Endothelial cell of umbilical vein (primary cell): ENCODE measurements at regions of chr1 and their contacts with region 1.

Region 1: GRCh38 chr1:156860113-156860627 is 495 bp upstream of the NTRK1 start:
- DNase-seq: peak; percentile 40
- H3K4me3 ChIP-seq: peak overlapping the region in 2 of 3 experiments; percentile 1 to 30
- H3K27ac ChIP-seq: no peak overlapping the region
- H3K4me1 ChIP-seq: peaks cover 17% of the 10 kb centered on the region
- H3K27me3 ChIP-seq: peaks cover 39 to 40% of the 10 kb centered on the region in 2 experiments
- CTCF ChIP-seq: peak; percentile 79 to 90
- POLR2A ChIP-seq: no peak

Region 2: DNA sequence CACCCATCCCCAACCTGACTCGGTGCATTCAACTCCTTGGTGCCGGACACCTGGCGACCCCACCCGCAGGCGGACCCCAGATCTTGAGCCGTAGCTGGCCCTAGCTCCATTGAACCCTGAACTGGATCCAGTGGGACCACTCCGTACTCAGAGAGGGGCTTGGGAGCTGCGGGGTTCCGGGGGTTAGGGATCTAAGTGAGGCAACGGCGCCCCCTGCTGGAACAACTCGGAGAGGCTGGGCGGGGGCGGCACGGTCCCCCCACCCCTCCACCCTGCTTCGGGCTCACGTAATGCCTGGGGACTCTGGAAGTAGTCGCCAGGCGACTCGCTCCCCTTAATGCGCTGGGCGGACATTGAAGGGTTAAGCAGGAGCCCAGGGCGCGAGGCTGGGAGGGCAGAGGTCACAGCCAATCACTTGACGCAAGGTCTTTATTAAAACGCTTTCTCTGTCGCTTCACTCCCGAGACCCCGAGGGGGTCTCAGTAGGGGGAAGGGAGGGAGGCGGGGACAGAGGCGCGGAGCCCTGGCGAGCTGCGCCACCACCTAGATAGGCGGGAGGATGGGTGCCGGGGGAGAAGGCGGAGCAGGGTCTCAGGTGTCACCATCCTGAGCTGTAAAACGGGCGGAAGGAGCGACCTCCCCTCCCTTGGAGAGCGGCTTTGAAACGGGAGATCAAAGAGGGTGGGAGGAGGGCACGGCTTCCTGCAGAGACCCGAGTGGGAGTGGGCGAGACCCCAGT is 154.1 kb before region 1 on chr1:
- CTCF ChIA-PET with region 1: interaction called, 10 read pairs
- POLR2A ChIA-PET with region 1: interaction called, 3 read pairs
- dilution Hi-C with region 1: no loop called
- intact Hi-C with region 1: no loop called
- DNase-seq: peak; percentile 57
- H3K4me3 ChIP-seq: peak overlapping the region in 1 of 3 experiments; percentile 4
- H3K27ac ChIP-seq: no peak overlapping the region
- H3K4me1 ChIP-seq: peaks cover 19% of the 10 kb centered on the region
- H3K27me3 ChIP-seq: peaks cover 0 to 3% of the 10 kb centered on the region in 2 experiments
- CTCF ChIP-seq: peak; percentile 76 to 87
- POLR2A ChIP-seq: no peak

Region 3: GRCh38 chr1:156773607-156774006 is 86.6 kb before region 1 on chr1:
- CTCF ChIA-PET with region 1: interaction called, 14 read pairs
- POLR2A ChIA-PET with region 1: no interaction called
- dilution Hi-C with region 1: no loop called
- intact Hi-C with region 1: no loop called
- DNase-seq: no peak
- H3K4me3 ChIP-seq: no peak overlapping the region
- H3K27ac ChIP-seq: no peak overlapping the region
- H3K4me1 ChIP-seq: peaks cover 10% of the 10 kb centered on the region
- H3K27me3 ChIP-seq: no peaks in the 10 kb centered on the region
- CTCF ChIP-seq: peak in 1 of 2 donors; percentile 6
- POLR2A ChIP-seq: no peak

Region 4: DNA sequence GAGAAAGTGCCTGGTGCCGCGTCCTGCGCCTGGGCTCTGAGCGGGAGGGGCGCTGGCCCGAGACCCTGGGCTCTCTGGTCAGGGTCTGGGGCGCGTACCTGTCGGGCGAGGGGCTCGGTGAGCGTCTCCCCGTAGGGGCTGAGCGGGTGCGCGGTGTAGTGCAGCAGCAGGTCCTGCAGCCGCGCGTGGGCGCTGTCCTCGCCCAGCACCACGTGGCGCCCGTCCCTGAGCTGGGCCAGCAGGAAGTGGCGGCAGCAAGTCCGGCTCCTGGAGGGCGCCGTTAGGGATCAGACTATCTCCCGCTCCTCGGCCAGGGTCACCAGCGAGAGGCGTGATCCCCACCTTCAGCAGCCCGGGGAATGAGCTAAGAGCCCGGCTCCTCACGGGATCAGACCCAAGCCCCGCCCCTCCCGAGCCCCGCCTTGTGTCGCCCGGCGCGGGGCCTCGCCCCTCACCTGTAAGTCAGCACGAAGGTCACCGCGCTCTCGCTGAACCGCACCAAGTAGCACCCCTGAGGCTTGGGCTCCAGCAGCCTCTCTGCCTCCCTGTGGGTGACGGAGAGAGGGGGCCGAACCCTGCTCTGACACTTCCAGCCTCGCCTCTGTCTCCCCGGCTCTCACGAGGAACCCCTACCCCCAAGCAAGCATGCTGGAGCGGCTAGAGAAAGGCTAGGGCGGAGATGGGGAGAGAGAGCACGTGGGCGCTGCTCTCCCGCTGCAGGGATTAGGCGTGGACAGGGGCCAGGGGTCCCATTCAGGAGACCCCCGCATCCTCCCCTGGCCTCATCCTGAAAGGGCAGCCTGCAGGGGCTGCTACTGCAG is 46.2 kb before region 1 on chr1:
- CTCF ChIA-PET with region 1: interaction called, 67 read pairs
- POLR2A ChIA-PET with region 1: no interaction called
- dilution Hi-C with region 1: no loop called
- intact Hi-C with region 1: loop called (anchors 1 kb)
- DNase-seq: peak; percentile 51
- H3K4me3 ChIP-seq: peak overlapping the region in 1 of 3 experiments; percentile 24
- H3K27ac ChIP-seq: peak overlapping the region; percentile 44
- H3K4me1 ChIP-seq: peaks cover 33% of the 10 kb centered on the region
- H3K27me3 ChIP-seq: no peaks in the 10 kb centered on the region
- CTCF ChIP-seq: peak; percentile 64 to 85
- POLR2A ChIP-seq: no peak

Region 5: DNA sequence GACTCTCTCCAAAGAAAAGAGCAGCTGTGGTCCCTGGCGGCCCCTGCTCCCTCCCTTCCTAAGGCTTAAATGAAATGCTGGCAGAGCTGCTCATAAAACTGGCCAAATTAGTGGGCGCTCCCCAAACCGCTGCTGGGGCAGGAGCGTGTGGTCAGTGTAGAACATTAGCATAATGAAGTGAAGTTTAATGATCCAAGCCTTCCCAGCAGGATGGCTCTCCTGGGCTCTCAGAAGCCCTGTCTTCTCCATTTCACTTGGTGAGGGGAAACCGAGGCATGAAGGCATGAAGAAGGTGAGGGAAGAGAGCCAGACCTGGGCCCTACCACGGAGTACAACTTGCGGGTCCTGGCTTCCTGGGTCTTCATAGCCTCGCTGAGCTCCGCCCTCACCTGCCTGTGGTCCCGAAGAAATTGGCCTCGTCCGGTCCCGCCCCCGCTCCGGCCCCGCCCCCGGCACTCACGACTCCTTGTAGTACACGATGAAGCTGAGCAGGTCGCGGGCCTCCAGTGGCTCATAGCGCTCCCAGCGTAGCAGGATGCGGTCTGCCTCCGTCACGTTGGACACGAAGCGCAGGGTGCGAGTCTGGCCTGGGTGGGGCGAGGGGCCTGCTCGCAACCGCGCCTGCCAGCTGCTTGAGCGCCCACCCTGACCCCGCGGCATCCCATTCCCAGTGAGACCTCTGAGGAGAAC is 11.6 kb before region 1 on chr1:
- CTCF ChIA-PET with region 1: interaction called, 42 read pairs
- POLR2A ChIA-PET with region 1: no interaction called
- dilution Hi-C with region 1: no loop called
- intact Hi-C with region 1: no loop called
- DNase-seq: no peak
- H3K4me3 ChIP-seq: no peak overlapping the region
- H3K27ac ChIP-seq: no peak overlapping the region
- H3K4me1 ChIP-seq: peaks cover 39% of the 10 kb centered on the region
- H3K27me3 ChIP-seq: peaks cover 53 to 57% of the 10 kb centered on the region in 2 experiments
- CTCF ChIP-seq: no peak
- POLR2A ChIP-seq: no peak

Region 6: GRCh38 chr1:156927215-156928042 is 67.3 kb after region 1 on chr1:
- CTCF ChIA-PET with region 1: interaction called, 56 read pairs
- POLR2A ChIA-PET with region 1: no interaction called
- dilution Hi-C with region 1: no loop called
- intact Hi-C with region 1: loop called (anchors 2 kb)
- DNase-seq: peak; percentile 79
- H3K4me3 ChIP-seq: peak overlapping the region in 1 of 3 experiments; percentile 17
- H3K27ac ChIP-seq: no peak overlapping the region
- H3K4me1 ChIP-seq: peaks cover 2% of the 10 kb centered on the region
- H3K27me3 ChIP-seq: peaks cover 17 to 25% of the 10 kb centered on the region in 2 experiments
- CTCF ChIP-seq: peak; percentile 82 to 93
- POLR2A ChIP-seq: no peak